Right lobe of liver (tissue), 6 donors: ENCODE measurements at regions of chr19 and their contacts with region 1.

Region 1: GRCh38 chr19:17947815-17948513 is 15.1 kb downstream of the CCDC124 start:
- DNase-seq: peak; percentile 90 to 94 (median 93)
- ATAC-seq: peak; percentile 79 to 94 (median 86)
- H3K4me3 ChIP-seq: peak overlapping the region; percentile 65 to 79 (median 78)
- H3K27ac ChIP-seq: no peak overlapping the region
- H3K4me1 ChIP-seq: peaks cover 0 to 5% (median 0%) of the 10 kb centered on the region in 4 donors
- H3K27me3 ChIP-seq: peaks cover 6 to 14% of the 10 kb centered on the region in 2 donors
- CTCF ChIP-seq: no peak
- POLR2A ChIP-seq: no peak

Region 2: GRCh38 chr19:17794731-17795536 is 153.0 kb before region 1 on chr19 and contains the start of gene B3GNT3:
- intact Hi-C with region 1: no loop called
- DNase-seq: peak in 2 of 3 donors; percentile 78 to 80
- ATAC-seq: peak; percentile 8 to 35 (median 28)
- H3K4me3 ChIP-seq: peak within 1 kb of the TSS in 2 of 3 donors; percentile 10 to 37
- H3K27ac ChIP-seq: peak within 1 kb of the TSS in 1 of 3 donors; percentile 3
- H3K4me1 ChIP-seq: peaks cover 0 to 10% (median 0%) of the 10 kb centered on the region in 4 donors
- H3K27me3 ChIP-seq: peaks cover 0 to 8% of the 10 kb centered on the region in 2 donors
- CTCF ChIP-seq: no peak
- POLR2A ChIP-seq: peak; percentile 51
- total RNA-seq, gene B3GNT3: 0.26 to 13.6 (median 3.1) TPM

Region 3: DNA sequence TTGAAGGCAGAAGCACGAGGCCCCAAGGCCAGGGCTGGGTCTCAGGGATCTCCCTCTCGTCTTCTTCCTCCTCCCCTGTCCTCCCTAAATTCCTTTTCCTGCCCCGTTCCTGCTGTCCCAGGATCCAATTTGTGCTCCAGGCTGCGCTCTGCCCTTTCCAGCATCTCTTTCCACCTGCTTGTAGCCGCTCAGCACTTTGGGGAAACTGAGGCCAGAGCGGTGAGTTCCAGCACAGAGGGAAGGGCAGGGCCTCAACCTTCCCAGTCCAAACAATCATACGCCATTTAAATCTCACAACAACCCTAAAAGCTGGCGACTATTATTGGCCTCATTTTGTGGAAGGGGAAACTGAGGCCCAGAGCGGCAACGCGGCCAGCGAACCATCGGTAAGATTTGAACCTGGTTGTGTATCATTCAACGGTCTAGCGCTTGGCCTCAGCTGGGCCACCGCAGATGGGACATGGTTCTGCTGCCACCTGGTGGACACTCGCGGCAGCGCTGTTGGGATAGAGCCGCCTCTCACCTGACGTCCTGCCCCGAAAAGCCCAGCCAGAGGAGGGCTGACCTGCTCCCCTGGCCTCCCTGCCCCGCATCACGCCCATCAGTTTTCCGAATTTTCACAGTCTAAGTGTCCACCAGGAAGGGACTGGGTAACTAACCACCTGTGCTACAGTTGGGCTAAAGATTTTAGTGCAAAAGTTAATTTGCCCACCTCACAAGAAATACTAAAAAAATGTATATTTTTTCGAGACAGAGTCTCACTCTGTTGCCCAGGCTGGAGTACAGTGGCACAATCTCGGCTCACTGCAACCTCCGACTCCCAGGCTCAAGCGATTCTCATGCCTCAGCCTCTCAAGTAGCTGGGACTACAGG is 92.4 kb before region 1 on chr19:
- intact Hi-C with region 1: no loop called
- DNase-seq: peak; percentile 86 to 89 (median 88)
- ATAC-seq: peak; percentile 63 to 71 (median 65)
- H3K4me3 ChIP-seq: no peak overlapping the region
- H3K27ac ChIP-seq: no peak overlapping the region
- H3K4me1 ChIP-seq: peaks cover 0 to 1% (median 0%) of the 10 kb centered on the region in 4 donors
- H3K27me3 ChIP-seq: no peaks in the 10 kb centered on the region
- CTCF ChIP-seq: peak; percentile 94 to 99 (median 98)
- POLR2A ChIP-seq: no peak

Region 4: DNA sequence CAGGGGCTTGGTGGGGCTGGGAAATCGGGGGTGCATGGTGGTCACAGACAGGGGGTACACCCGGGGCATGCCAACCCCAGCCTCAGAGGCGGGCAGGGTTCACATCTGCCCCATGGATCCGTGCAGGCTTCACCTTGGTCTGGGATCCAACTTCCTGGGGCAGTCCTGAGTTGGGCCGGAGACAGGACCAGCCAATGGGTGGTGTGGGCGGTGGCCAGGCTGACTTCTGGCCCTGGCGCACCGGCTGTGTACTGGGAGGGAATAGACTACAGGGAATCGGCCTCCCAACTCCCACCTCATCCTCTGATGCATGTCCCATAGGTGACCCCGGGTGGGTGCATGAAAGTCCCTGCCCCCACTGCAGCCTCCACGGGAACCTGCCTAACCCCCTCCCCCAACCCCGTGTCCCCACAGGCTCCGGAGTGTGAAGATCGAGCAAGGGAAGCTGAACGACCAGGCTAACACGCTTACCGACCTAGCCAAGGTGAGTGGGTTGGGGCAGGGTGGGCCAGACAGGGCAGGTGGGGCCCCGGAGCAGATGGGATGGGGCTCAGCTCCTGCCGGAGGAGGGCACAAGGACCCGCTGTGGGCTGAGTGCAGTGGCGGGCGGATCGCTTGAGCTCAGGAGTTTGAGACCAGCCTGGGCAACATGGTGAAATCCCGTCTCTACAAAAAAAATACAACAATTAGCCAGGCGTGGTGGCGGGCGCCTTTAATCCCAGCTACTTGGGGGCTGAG is 45.3 kb after region 1 on chr19:
- intact Hi-C with region 1: loop called in 1 of 2 experiments (anchors 5 kb)
- DNase-seq: no peak
- ATAC-seq: no peak
- H3K4me3 ChIP-seq: no peak overlapping the region
- H3K27ac ChIP-seq: no peak overlapping the region
- H3K4me1 ChIP-seq: no peaks in the 10 kb centered on the region
- H3K27me3 ChIP-seq: no peaks in the 10 kb centered on the region
- CTCF ChIP-seq: no peak
- POLR2A ChIP-seq: no peak

Region 5: DNA sequence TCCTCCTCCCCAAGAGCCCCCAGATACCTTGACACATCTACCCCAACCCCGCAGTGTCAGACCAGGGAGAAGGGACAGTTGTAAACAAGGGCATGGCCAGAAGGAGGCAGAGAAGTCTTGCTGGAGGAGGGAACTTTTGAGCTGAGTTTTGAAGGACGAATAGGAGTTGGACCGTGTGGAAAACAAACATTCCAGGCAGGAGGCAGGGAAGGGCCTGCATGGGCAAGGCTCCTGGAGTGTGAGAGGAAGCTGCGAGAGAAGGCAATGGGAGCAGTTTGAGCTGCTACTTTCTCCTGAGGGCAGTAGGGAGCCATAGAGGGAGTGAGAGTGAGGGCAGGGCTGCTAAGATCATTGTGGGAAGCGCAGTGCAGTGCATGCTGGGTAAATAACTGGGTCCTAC is 115.5 kb after region 1 on chr19:
- intact Hi-C with region 1: loop called in 1 of 2 experiments (anchors 10 kb)
- DNase-seq: peak in 2 of 3 donors; percentile 40 to 67
- ATAC-seq: peak in 3 of 4 donors; percentile 56 to 73 (median 62)
- H3K4me3 ChIP-seq: no peak overlapping the region
- H3K27ac ChIP-seq: no peak overlapping the region
- H3K4me1 ChIP-seq: peaks cover 0 to 2% (median 0%) of the 10 kb centered on the region in 4 donors
- H3K27me3 ChIP-seq: no peaks in the 10 kb centered on the region
- CTCF ChIP-seq: peak in 2 of 4 donors; percentile 26 to 41
- POLR2A ChIP-seq: no peak